ENCODE measurements at regions of chr9 and their contacts with region 1.

Region 1: DNA sequence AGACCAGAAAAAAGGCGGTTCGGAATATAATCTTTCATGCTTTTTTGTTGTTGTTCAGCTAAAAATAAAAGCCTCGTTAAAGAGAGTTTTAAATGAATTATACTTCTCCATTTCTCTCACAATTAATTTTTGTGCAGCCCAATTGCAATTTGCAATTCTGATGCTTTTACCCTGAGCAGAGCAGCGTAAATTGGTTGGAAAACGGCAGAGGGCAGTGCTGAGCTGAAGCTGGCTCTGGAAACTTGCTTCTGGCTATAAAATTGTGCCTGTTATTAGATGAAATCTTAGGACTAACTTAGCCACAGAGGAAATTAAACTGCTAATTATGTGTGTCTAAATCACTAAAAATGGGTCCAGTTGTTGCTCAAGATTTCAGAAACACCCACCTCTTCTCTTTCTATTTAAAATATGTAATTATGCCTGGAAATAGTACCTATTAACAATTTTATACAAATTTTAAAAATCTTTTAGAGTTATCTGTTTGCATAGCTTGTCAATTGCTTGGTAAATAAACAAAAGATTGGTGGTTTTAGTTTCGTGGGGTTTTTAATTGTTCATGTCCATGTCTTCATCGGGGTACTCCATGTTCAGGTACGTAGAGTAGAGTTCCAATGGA is 441.8 kb upstream of the TLE4 start:
- DNase-seq: peak; percentile 20
- H3K4me3 ChIP-seq: no peak overlapping the region
- H3K27ac ChIP-seq: no peak overlapping the region
- H3K27me3 ChIP-seq: no peaks in the 10 kb centered on the region
- CTCF ChIP-seq: peak; percentile 98

Region 2: DNA sequence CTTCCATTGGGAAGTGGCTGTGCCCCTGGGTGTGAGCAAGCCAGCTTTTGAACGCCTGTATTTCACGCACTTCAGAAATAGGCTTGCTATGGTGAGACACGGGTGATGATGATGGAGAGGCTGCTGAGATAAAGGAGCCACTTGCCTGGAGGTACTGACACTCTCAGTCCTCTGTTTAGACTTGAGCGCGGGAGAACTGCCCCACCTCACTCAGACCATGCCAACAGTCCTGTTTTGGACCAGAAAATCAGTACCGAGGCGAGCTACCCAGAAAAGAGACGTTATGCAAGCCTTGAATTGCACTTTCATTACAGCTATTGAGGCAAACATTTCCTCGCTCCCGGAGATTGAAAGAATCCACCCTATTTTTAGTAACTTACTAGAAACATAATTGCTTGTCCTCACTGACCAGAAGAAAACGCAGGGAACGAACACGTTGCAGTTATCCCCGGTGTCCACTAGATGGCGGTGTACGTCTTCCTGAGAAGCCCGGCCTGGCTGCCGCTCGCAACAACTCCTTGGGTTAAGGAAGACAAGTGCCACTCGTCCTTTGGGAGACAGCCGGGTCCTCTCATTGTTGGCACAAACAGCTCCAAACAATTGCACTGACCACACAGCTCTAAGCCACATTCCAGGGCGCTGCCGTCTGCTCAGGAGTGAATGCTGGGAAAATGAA is 690.6 kb before region 1 on chr9:
- CTCF ChIA-PET with region 1: interaction called, 17 read pairs
- POLR2A ChIA-PET with region 1: no interaction called
- DNase-seq: peak; percentile 81
- H3K4me3 ChIP-seq: peak overlapping the region; percentile 52
- H3K27ac ChIP-seq: no peak overlapping the region
- H3K27me3 ChIP-seq: peaks cover 10% of the 10 kb centered on the region
- CTCF ChIP-seq: peak; percentile 96

Region 3: GRCh38 chr9:78601957-78602565 is 527.9 kb before region 1 on chr9:
- CTCF ChIA-PET with region 1: interaction called, 12 read pairs
- POLR2A ChIA-PET with region 1: no interaction called
- DNase-seq: no peak
- H3K4me3 ChIP-seq: peak overlapping the region; percentile 26
- H3K27ac ChIP-seq: no peak overlapping the region
- H3K27me3 ChIP-seq: no peaks in the 10 kb centered on the region
- CTCF ChIP-seq: peak; percentile 88

Region 4: GRCh38 chr9:78985084-78985738 is 144.8 kb before region 1 on chr9:
- CTCF ChIA-PET with region 1: no interaction called
- POLR2A ChIA-PET with region 1: no interaction called
- DNase-seq: peak; percentile 1
- H3K4me3 ChIP-seq: no peak overlapping the region
- H3K27ac ChIP-seq: no peak overlapping the region
- H3K27me3 ChIP-seq: no peaks in the 10 kb centered on the region
- CTCF ChIP-seq: no peak

Region 5: GRCh38 chr9:79140773-79141172 is 10.8 kb after region 1 on chr9:
- CTCF ChIA-PET with region 1: interaction called, 26 read pairs
- POLR2A ChIA-PET with region 1: no interaction called
- DNase-seq: no peak
- H3K4me3 ChIP-seq: no peak overlapping the region
- H3K27ac ChIP-seq: no peak overlapping the region
- H3K27me3 ChIP-seq: no peaks in the 10 kb centered on the region
- CTCF ChIP-seq: no peak

Region 6: DNA sequence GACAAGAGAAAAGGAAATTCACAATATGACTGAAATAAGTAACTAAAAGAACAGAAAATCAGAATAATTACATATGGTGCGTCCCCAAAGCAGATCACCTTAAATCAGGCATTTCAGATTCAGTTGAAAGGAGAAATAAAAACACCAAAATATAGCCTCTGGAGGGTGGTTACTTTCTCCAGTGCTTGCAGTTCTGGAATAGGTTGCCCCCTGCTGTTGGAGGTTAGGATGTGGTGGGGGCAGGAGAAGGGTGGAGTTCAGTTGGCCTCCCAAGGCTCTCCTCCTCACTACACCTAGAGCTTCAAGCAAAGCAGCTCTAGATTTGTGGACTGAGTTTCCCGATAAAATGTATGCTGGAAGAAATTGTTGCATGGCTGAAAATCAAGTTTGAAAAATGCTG is 103.6 kb after region 1 on chr9:
- CTCF ChIA-PET with region 1: interaction called, 17 read pairs
- POLR2A ChIA-PET with region 1: no interaction called
- DNase-seq: no peak
- H3K4me3 ChIP-seq: no peak overlapping the region
- H3K27ac ChIP-seq: no peak overlapping the region
- H3K27me3 ChIP-seq: no peaks in the 10 kb centered on the region
- CTCF ChIP-seq: peak; percentile 42

Region 7: DNA sequence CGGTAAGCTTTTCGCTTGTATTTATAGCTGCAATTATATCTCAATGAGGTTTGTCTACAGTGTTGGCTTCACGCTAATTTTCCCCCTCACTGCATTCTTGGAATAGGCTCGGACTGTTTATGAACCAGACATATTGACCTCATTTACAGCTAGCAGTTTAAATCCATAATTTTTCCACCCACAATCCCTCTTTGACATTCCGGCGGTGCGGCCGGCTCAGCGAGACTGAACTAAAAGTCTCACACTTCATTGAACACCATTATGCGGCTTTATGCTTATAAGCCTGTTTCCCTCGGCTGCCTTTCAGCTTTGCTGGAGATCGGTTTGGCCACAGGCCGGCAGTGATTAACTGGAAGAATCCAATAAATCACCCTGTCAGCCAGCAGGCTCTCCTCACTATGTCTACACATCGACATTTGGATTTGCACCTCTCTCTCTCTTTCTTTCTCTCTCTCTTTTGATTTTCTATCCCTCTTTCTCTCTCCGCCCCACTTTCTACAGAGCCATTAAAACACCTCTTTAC is 126.8 kb after region 1 on chr9:
- CTCF ChIA-PET with region 1: interaction called, 25 read pairs
- POLR2A ChIA-PET with region 1: no interaction called
- DNase-seq: no peak
- H3K4me3 ChIP-seq: no peak overlapping the region
- H3K27ac ChIP-seq: no peak overlapping the region
- H3K27me3 ChIP-seq: no peaks in the 10 kb centered on the region
- CTCF ChIP-seq: no peak

Region 8: DNA sequence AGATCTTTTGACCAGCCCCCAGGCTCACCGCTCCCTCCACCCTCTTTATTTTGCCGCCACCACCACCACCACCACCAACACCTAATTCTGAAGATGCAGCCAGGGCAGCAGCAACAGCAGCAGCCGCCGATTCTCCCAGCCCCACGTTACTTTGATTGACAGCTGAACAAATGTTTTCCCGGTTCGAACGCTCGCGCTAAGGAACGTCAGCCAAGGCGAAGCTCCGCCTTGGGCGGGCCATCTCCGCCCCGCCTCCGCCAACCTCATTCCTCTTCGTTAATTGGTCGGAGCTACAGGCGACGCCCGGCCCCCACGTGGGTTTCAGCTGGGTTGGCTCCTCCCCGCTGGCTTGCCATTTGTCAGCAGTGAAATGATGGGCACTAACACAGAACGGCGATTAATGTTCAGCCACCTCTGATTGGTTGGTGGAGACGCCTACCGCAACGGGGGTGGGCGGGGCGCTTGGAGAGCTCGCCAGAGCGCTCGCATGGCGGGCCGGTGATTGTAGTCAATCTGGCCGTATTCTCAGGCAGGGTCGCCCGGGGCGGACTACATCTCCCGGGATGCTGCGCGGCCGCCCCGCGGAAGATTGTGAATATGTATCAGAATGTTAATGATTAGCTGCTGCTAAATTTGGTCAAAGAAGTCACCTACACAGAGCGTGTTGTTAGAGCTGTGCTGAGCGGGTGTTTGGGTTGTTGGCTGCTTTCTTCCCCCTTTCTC is 441.5 kb after region 1 on chr9 and contains the start of gene TLE4:
- CTCF ChIA-PET with region 1: interaction called, 10 read pairs
- POLR2A ChIA-PET with region 1: no interaction called
- DNase-seq: peak; percentile 100
- H3K4me3 ChIP-seq: peak within 1 kb of the TSS; percentile 79
- H3K27ac ChIP-seq: peak within 1 kb of the TSS; percentile 83
- H3K27me3 ChIP-seq: no peaks in the 10 kb centered on the region
- CTCF ChIP-seq: no peak
- polyA plus RNA-seq, gene TLE4: 42.2 and 53.4 TPM in 2 replicates

Measured in AG04450 (cell line).